GM10248 (cell line): ENCODE measurements at regions of chr15 and their contacts with region 1.

Region 1: DNA sequence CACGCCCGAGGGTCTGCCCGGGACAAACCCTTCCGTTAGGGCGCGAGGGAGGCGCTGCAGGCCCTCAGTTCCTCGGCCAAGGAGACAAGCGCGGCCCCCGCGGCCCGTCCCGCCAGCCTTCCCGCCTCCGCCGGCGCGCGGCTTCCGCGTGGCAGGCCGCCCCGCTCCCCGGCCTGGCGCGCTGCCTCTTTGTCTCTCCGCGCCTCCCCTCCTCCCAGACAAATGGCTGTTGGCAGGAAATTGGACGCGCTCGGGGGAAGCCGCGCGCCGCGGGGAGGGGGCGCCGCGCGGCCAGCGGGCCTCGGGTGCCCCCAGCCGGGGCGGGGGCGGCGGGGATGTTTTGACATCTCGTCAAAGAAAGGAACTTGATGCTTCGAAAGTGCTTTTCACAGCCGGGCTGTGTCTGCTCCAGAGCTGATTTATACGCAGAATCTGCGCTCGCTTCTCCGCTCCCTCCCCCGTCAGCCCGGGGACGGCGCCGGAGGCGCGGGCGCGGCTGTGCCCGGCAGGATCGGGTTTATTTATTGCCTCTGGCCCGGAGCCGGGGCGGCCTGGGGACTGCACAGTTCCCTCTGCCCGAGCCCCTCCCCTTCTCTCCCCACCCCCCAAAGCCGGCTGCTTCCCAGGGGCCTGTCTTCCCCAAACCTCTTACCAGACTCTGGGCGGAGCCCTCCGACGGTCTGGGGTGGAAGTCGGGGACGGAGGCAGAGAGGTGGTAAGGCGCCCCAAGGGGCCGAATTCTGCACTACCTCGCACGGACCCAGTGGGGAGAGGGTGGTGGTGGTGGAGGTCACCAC is 20.7 kb downstream of the SHF start:
- DNase-seq: peak; percentile 90
- CTCF ChIP-seq: peak; percentile 73

Region 2: GRCh38 chr15:45126535-45127158 is 40.4 kb before region 1 on chr15:
- CTCF ChIA-PET with region 1: interaction called, 12 read pairs
- POLR2A ChIA-PET with region 1: no interaction called
- DNase-seq: no peak
- CTCF ChIP-seq: peak; percentile 60

Region 3: DNA sequence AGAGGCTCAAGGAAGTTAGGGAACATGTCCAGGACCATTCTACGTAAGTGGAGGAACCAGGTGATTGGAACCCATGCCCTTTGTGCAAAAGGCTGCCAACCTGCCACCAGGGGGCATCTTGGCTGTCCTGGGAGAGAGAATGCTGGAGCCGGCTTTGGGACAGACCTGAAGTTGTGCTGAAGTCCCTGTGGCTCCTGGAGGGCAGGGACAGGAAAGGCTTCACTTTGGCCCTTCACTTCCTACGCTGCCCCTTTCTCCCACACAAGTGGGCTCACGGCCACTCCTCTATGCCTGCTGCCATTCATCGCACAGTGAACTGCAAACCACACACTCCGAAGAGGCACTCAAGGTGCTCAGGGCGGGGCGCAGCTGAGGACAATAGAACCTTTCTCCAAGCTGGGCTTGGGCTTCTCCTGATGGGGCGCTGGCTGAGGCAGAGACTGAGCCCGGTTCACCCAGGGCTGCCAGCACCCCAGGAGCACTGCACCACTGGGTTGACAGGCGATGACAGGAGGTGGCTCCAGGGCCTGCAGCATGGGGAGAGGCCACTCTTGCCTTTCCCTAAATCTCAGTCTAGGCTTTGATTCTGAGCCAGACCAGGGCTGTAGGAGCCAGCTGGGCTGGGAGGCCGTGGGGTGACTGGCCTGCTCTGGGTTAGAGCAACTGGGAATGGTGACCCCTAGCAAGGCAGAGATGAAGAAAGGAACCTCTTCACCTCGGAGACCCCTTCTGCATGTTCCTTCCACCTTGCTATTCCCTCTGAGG is 12.4 kb after region 1 on chr15:
- CTCF ChIA-PET with region 1: interaction called, 234 read pairs
- POLR2A ChIA-PET with region 1: no interaction called
- DNase-seq: peak; percentile 60
- CTCF ChIP-seq: peak; percentile 48

Region 4: DNA sequence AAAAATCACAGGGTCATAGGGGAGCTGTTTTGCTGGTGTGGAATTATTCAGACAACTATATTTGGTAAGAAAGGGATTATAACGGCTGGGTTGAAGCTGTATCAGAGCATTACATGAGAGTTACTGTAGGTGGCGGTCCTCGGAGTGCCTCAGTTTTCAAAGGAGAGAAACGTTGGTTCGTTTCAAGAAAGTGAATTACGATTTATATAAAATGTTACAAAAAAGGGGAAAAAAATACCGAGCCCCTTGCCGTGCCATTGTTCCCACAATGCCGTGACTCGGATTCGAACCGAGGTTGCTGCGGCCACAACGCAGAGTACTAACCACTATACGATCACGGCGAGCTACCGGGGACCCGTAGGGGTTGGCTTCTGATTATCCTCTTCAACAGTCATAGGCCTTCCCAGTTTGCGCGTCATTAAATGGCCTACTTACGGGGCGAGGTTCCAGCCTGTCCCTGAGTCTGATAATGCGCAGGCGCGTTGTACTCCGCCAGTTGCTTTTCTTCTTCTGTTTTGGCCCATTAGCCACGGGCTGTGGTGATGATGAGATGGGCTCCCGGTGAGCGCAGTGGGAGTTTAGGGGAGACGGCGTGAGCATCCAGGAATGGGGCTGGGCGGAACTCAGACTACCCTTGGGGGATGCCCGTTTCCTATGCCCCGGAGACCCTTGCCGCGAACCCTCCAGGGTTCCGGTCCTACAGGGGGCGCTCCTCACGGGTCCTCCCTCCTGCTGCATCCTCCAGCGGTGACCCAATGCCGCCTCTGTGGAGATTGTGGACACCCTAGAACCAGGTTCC is 31.5 kb after region 1 on chr15:
- CTCF ChIA-PET with region 1: interaction called, 49 read pairs
- POLR2A ChIA-PET with region 1: interaction called, 11 read pairs
- DNase-seq: peak; percentile 90
- CTCF ChIP-seq: peak; percentile 69

Region 5: DNA sequence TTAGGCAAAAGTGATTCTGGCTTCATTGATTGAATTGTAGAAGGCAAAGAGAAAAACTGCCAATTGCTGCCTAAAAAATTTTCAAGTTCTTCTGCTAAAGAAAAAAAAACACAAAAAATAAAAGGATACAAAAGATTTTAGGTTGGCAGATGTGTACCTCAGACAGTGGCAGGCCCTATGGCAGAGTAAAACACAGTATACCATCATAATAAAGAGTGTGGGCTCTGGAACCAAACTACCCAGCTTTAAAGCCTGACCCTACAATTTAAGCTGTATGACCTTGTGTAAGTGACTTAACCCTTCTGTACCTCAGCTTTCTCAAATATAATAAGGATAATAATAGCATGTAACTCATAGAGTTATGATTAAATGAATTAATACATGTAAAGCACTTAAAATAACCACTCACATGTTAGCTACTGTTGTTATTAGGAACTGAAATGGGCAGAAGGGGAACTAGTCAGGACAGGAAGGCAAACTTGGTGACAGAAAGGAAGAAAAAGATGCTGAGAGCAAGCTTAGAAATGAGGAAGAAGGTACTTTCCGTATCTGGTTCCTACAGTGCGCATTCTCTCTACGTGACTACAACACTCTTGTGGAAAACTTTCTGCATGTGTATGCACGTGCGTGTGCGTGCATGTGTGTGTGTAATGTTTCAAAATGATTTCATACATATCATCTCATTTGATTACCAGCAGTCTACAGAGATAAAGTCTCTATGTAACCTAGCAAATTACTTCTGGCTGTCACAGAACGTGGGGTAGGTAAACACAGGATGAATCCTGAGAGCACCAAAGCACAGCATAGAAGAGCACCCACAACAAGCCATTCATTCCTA is 224.9 kb after region 1 on chr15:
- CTCF ChIA-PET with region 1: interaction called, 11 read pairs
- POLR2A ChIA-PET with region 1: no interaction called
- DNase-seq: peak; percentile 66
- CTCF ChIP-seq: no peak

Region 6: GRCh38 chr15:45429974-45430792 is 263.2 kb after region 1 on chr15:
- CTCF ChIA-PET with region 1: interaction called, 13 read pairs
- POLR2A ChIA-PET with region 1: no interaction called
- DNase-seq: peak; percentile 90
- CTCF ChIP-seq: peak; percentile 98